Motor neuron (in vitro differentiated cells): ENCODE measurements at regions of chr10 and their contacts with region 1.

Region 1: DNA sequence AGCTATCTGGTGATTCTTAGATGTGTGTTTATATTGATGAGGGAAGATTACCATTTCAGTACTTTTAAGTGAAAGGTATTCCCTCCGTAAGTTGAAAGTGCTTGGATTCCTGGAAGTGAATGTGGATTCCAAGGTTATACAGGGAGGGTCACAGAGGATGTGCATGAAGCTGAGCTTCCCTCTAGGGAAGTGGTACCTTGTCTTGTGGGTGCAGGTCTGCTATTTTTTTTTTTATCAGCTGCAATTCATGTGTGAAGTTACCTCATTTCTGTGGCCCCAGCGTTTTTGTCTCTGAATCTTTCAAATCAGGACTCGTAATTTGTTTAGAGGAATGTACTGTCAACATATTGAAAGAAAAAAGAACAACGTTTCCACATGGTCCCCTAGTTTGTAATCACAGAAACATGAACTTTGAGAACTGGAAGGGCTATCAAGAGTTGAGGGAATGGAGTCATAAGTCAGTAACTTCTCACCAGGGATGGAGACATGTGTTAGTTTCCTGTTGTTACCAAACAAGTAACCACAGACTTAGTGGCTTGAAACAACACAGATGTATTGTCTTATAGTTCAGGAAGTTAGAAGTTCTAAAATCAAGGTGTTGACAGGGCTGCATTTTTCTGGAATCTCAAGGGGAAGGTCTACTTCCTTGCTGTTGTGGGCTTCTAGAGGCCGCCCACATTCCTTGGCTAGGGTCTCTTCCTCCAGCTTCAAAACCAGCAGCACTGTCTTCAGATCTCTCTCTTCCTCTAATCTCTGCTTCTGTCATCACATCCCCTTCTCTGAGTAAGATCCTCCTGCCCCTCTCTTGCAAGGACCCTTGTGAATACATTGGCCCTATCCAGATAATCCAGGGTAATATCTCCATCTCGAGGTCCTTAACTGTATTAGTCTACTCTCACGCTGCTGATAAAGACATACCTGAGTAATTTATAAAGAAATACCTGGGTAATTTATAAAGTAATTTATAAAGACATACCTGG is 64.4 kb downstream of the RAB18 start:
- ATAC-seq: no peak
- H3K4me3 ChIP-seq: no peak overlapping the region
- H3K27ac ChIP-seq: no peak overlapping the region
- H3K4me1 ChIP-seq: no peaks in the 10 kb centered on the region

Region 2: GRCh38 chr10:27658788-27659187 is 90.3 kb after region 1 on chr10:
- in situ Hi-C with region 1: loop called in 1 of 9 experiments (anchors 10 kb)
- ATAC-seq: no peak
- H3K4me3 ChIP-seq: no peak overlapping the region
- H3K27ac ChIP-seq: no peak overlapping the region
- H3K4me1 ChIP-seq: no peaks in the 10 kb centered on the region